ENCODE measurements at regions of chr10 and their contacts with region 1.

Region 1: GRCh38 chr10:104291439-104291951 is 22.5 kb downstream of the GSTO2 start:
- DNase-seq: peak; percentile 93
- ATAC-seq: peak; percentile 98
- H3K4me3 Mint-ChIP-seq: no peak overlapping the region
- H3K27ac Mint-ChIP-seq: no peak overlapping the region
- H3K4me1 Mint-ChIP-seq: peaks cover 13% of the 10 kb centered on the region
- H3K27me3 Mint-ChIP-seq: peaks cover 32% of the 10 kb centered on the region

Region 2: GRCh38 chr10:104254493-104255310 is 36.8 kb before region 1 on chr10 and contains the start of gene GSTO1:
- CTCF ChIA-PET with region 1: interaction called, 18 read pairs
- POLR2A ChIA-PET with region 1: interaction called, 4 read pairs
- DNase-seq: peak; percentile 62
- ATAC-seq: peak; percentile 81
- H3K4me3 Mint-ChIP-seq: peak within 1 kb of the TSS; percentile 93
- H3K27ac Mint-ChIP-seq: peak within 1 kb of the TSS; percentile 97
- H3K4me1 Mint-ChIP-seq: peaks cover 50% of the 10 kb centered on the region
- H3K27me3 Mint-ChIP-seq: peaks cover 4% of the 10 kb centered on the region
- total RNA-seq, gene GSTO1: 114 to 119 TPM

Region 3: GRCh38 chr10:104268716-104269645 is 22.5 kb before region 1 on chr10 and contains the start of gene GSTO2:
- CTCF ChIA-PET with region 1: interaction called, 265 read pairs
- POLR2A ChIA-PET with region 1: interaction called, 3 read pairs
- DNase-seq: peak; percentile 99
- ATAC-seq: peak; percentile 99
- H3K4me3 Mint-ChIP-seq: peak within 1 kb of the TSS; percentile 87
- H3K27ac Mint-ChIP-seq: peak within 1 kb of the TSS; percentile 86
- H3K4me1 Mint-ChIP-seq: peaks cover 48% of the 10 kb centered on the region
- H3K27me3 Mint-ChIP-seq: peaks cover under 1% of the 10 kb centered on the region
- total RNA-seq, gene GSTO2: 0.94 to 1.2 TPM

Region 4: DNA sequence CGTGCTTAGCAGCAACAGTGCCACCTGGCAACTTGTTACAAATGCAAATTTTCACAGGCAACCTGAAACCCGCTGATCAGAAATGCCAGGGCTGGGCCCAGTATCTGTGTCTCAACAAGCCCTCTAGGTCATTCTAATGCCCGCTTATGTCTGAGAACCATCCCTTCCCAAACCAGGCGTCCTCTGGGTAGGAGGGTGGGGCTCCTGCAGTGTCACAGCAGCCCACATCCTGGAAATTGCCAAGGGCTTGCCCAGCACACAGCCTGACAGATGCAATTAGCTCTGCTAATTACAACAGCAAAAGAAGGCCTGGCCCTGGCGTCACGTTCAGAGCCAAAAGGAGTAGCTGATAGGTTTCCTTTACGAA is 30.9 kb after region 1 on chr10:
- CTCF ChIA-PET with region 1: interaction called, 30 read pairs
- POLR2A ChIA-PET with region 1: no interaction called
- DNase-seq: peak; percentile 65
- ATAC-seq: peak; percentile 54
- H3K4me3 Mint-ChIP-seq: peak overlapping the region; percentile 61
- H3K27ac Mint-ChIP-seq: peak overlapping the region; percentile 91
- H3K4me1 Mint-ChIP-seq: peaks cover 93% of the 10 kb centered on the region
- H3K27me3 Mint-ChIP-seq: no peaks in the 10 kb centered on the region

Region 5: GRCh38 chr10:104337974-104338735 is 46.7 kb after region 1 on chr10 and contains the start of gene ITPRIP:
- CTCF ChIA-PET with region 1: interaction called, 15 read pairs
- POLR2A ChIA-PET with region 1: interaction called, 8 read pairs
- DNase-seq: peak; percentile 82
- ATAC-seq: peak; percentile 79
- H3K4me3 Mint-ChIP-seq: peak within 1 kb of the TSS; percentile 94
- H3K27ac Mint-ChIP-seq: peak within 1 kb of the TSS; percentile 100
- H3K4me1 Mint-ChIP-seq: peaks cover 49% of the 10 kb centered on the region
- H3K27me3 Mint-ChIP-seq: peaks cover 10% of the 10 kb centered on the region
- total RNA-seq, gene ITPRIP: 26.6 to 27.1 TPM